ENCODE measurements at regions of chr9 and their contacts with region 1.

Region 1: GRCh38 chr9:18255158-18255629 is 218.8 kb upstream of the ADAMTSL1 start:
- DNase-seq: peak; percentile 45 to 69 (median 58)
- H3K4me3 ChIP-seq: no peak overlapping the region
- H3K4me3 Mint-ChIP-seq: no peak overlapping the region
- H3K27ac ChIP-seq: no peak overlapping the region
- H3K27ac Mint-ChIP-seq: peak overlapping the region in 1 of 8 donors; percentile 31
- H3K4me1 ChIP-seq: no peaks in the 10 kb centered on the region
- H3K4me1 Mint-ChIP-seq: peaks cover 0 to 8% (median 4%) of the 10 kb centered on the region in 3 donors
- H3K27me3 ChIP-seq: peaks cover 3% of the 10 kb centered on the region
- H3K27me3 Mint-ChIP-seq: peaks cover 2 to 13% of the 10 kb centered on the region in 2 donors

Region 2: GRCh38 chr9:18229992-18230676 is 25.1 kb before region 1 on chr9:
- CTCF ChIA-PET with region 1: no interaction called
- POLR2A ChIA-PET with region 1: no interaction called
- DNase-seq: no peak
- H3K4me3 ChIP-seq: no peak overlapping the region
- H3K4me3 Mint-ChIP-seq: no peak overlapping the region
- H3K27ac ChIP-seq: no peak overlapping the region
- H3K27ac Mint-ChIP-seq: no peak overlapping the region
- H3K4me1 ChIP-seq: no peaks in the 10 kb centered on the region
- H3K4me1 Mint-ChIP-seq: no peaks in the 10 kb centered on the region
- H3K27me3 ChIP-seq: no peaks in the 10 kb centered on the region
- H3K27me3 Mint-ChIP-seq: peaks cover 0 to 4% of the 10 kb centered on the region in 2 donors

Region 3: DNA sequence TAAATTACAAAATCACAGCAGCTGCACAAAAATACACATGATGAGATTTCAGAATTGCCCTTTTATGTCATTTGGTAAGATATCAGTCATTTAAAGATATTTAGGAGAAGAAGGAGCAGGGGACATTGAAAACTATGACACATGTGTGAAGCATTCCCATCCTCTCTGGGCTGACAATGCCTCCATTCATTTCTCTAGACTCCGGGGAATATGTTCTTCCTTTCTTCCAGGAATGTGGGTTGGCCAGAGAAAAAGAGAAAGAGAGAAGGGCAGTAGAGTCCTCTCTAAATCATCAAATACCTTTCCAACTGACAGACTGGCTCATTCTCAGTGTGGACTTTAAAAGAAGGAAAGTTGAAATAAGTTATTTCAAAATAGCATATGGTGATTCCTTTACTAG is 13.2 kb after region 1 on chr9:
- CTCF ChIA-PET with region 1: interaction called, 20 read pairs
- POLR2A ChIA-PET with region 1: no interaction called
- DNase-seq: no peak
- H3K4me3 ChIP-seq: no peak overlapping the region
- H3K4me3 Mint-ChIP-seq: no peak overlapping the region
- H3K27ac ChIP-seq: no peak overlapping the region
- H3K27ac Mint-ChIP-seq: no peak overlapping the region
- H3K4me1 ChIP-seq: no peaks in the 10 kb centered on the region
- H3K4me1 Mint-ChIP-seq: no peaks in the 10 kb centered on the region
- H3K27me3 ChIP-seq: no peaks in the 10 kb centered on the region
- H3K27me3 Mint-ChIP-seq: no peaks in the 10 kb centered on the region

Region 4: DNA sequence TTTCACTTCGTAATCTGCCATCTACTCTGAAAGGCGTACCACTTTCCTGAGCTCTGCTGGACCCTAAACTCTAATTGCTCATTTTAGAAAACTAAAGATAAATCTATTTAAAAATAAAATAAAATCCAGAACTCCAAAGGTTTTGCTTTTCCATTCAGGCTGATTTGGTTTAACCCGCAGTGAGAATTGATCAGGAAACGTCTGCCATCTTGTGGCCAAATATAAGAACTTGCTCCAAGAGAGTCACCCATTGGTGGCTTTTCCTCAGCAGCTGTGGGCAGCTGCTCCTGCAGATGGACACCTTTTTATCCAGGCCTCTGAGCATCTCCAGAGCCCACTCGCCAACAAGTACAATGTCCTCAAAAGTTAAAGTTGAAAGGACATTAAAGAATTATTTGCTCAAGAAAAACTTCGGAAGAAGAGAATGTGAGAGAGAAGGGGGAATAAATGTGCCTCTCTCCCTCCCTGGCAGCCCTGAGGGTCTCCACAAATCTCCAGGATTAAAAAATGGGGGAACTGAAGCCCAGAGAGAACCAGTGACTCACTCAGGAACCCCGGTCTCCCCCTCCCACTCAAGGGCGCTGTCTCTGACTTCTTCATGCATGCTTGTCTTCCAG is 773.7 kb after region 1 on chr9:
- CTCF ChIA-PET with region 1: interaction called, 10 read pairs
- POLR2A ChIA-PET with region 1: no interaction called
- DNase-seq: peak in 1 of 5 donors; percentile 18
- H3K4me3 ChIP-seq: no peak overlapping the region
- H3K4me3 Mint-ChIP-seq: no peak overlapping the region
- H3K27ac ChIP-seq: no peak overlapping the region
- H3K27ac Mint-ChIP-seq: no peak overlapping the region
- H3K4me1 ChIP-seq: no peaks in the 10 kb centered on the region
- H3K4me1 Mint-ChIP-seq: peaks cover 0 to 4% (median 1%) of the 10 kb centered on the region in 3 donors
- H3K27me3 ChIP-seq: peaks cover 6% of the 10 kb centered on the region
- H3K27me3 Mint-ChIP-seq: peaks cover 4 to 26% of the 10 kb centered on the region in 2 donors

Region 5: DNA sequence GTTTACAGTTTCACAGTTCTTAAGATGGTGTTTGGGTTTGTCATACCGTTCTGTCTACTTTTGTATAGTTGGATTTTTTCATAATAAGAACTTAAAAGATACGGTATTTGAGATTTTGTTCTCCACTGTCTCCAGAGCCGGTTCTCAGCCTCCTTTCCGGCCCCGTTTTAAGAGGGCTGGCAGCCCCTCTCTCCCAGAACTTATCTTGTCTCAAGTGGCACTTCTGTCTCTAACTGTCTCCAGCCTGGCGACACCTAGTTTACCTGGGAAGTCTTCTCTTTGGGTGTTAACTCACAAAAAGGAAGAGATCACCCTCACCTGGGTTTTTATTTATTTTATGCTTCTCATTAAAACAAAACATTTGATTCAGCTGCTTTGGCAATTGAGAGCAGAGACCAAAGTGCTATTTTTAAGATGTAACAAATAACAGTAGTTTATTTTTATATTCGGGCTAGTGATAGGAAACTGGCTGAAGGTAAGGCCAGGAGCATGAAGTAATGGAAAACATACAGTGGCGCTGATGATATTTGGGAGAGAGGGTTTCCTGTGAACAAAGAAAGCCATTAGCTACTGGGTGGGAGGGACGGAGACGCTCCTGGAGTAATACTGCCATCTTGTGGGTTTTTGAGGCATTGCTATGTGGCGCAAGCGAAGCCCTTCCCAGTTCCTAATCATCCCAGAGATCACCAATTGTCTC is 1202.0 kb after region 1 on chr9:
- CTCF ChIA-PET with region 1: interaction called, 20 read pairs
- POLR2A ChIA-PET with region 1: no interaction called
- DNase-seq: peak; percentile 43 to 68 (median 60)
- H3K4me3 ChIP-seq: no peak overlapping the region
- H3K4me3 Mint-ChIP-seq: peak overlapping the region in 6 of 7 donors; percentile 0 to 67 (median 52)
- H3K27ac ChIP-seq: no peak overlapping the region
- H3K27ac Mint-ChIP-seq: peak overlapping the region in 1 of 8 donors; percentile 54
- H3K4me1 ChIP-seq: peaks cover 7% of the 10 kb centered on the region
- H3K4me1 Mint-ChIP-seq: peaks cover 6 to 8% (median 7%) of the 10 kb centered on the region in 3 donors
- H3K27me3 ChIP-seq: no peaks in the 10 kb centered on the region
- H3K27me3 Mint-ChIP-seq: peaks cover 0 to 1% of the 10 kb centered on the region in 2 donors

Measured in CD8-positive, alpha-beta memory T cell (primary cell).